ENCODE measurements at regions of chrX and their contacts with region 1.

Region 1: DNA sequence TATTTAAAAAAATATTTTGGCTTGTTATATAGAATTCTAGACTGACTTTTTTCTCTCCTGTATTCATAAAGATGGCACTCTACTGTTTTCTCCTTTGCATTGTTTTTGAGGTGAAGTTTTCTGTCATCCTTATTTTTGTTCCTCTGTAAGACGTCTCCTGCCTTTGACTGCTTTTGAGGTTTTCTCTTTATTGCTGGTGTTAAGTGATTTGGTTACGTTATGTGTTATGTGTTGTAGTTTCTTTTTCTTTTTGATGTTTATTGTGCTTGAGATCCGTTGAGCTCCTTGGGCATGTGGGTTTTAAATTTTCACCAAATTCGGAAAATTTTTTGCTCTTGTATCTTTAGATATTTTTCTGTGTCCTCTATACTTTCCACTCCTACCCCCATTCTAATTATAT is 50.0 kb downstream of the KDM6A start:
- DNase-seq: no peak
- H3K4me3 ChIP-seq: no peak overlapping the region
- H3K27ac ChIP-seq: no peak overlapping the region
- H3K4me1 ChIP-seq: no peaks in the 10 kb centered on the region
- H3K27me3 ChIP-seq: no peaks in the 10 kb centered on the region
- CTCF ChIP-seq: no peak
- POLR2A ChIP-seq: no peak

Region 2: DNA sequence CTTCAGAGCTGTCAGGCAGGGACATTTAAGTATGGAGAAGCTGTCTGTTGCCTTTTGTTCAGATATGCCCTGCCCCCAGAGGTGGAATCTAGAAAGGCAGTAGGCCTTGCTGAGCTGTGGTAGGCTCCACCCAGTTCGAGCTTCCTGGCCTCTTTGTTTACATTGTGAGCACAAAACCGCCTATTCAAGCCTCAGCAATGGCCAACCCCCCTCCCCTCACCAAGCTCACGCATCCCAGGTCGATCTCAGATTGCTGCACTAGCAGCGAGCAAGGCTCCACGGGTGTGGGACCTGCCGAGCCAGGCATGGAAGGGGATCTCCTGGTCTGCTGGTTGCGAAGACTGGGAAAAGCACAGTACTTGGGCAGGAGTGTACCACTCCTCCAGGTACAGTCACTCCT is 1562.9 kb after region 1 on chrX:
- intact Hi-C with region 1: loop called (anchors 10 kb)
- DNase-seq: no peak
- H3K4me3 ChIP-seq: no peak overlapping the region
- H3K27ac ChIP-seq: no peak overlapping the region
- H3K4me1 ChIP-seq: no peaks in the 10 kb centered on the region
- H3K27me3 ChIP-seq: no peaks in the 10 kb centered on the region
- CTCF ChIP-seq: no peak
- POLR2A ChIP-seq: no peak

Measured in breast epithelium (tissue), 4 donors.